PC-9 (cell line): ENCODE measurements at regions of chr5 and their contacts with region 1.

Region 1: GRCh38 chr5:72767289-72767998 is 49.0 kb upstream of the TNPO1 start:
- DNase-seq: no peak
- H3K4me3 ChIP-seq: no peak overlapping the region
- H3K27ac ChIP-seq: no peak overlapping the region
- H3K4me1 ChIP-seq: no peaks in the 10 kb centered on the region
- H3K27me3 ChIP-seq: no peaks in the 10 kb centered on the region
- CTCF ChIP-seq: no peak

Region 2: DNA sequence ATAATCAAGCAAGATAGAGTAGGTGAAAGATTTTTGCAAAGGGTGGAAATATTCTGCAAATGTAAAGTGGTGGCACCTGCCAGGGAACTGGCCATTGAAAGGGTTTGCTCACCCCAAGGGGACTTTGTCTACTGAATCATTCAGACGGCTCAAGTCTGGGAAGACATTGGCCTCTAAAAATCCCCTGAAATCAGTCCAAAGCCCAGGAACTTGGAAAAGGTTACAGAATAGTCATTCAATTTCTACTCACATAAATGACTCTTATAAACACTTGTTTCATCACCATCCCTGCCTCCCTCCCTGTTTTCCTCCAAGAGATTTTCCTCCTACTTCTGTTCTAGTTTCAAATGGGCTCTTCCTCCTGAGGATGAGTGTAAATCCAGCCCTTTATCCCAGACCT is 288.8 kb before region 1 on chr5:
- CTCF ChIA-PET with region 1: no interaction called
- POLR2A ChIA-PET with region 1: no interaction called
- intact Hi-C with region 1: no loop called
- DNase-seq: no peak
- H3K4me3 ChIP-seq: no peak overlapping the region
- H3K27ac ChIP-seq: no peak overlapping the region
- H3K4me1 ChIP-seq: no peaks in the 10 kb centered on the region
- H3K27me3 ChIP-seq: no peaks in the 10 kb centered on the region
- CTCF ChIP-seq: no peak

Region 3: DNA sequence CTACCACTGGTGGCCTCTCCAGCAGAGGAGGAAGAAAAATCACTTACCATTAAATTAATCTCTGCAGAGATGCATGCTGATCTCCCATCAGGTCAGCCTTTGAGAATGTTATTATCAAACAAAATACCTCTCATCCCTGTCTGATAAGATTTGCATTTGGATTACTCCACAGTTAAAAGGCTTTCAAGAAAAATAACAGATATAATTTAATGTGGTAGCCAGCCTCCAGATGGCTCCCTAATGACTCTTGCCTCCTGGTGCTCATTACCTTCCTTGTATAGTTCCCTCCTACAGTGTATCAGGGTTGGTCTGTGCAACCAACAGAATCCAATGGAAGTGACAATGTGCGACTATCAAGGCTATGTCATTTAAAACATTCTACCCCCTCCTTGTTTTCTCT is 14.5 kb before region 1 on chr5:
- CTCF ChIA-PET with region 1: no interaction called
- POLR2A ChIA-PET with region 1: interaction called, 10 read pairs
- intact Hi-C with region 1: no loop called
- DNase-seq: no peak
- H3K4me3 ChIP-seq: no peak overlapping the region
- H3K27ac ChIP-seq: no peak overlapping the region
- H3K4me1 ChIP-seq: no peaks in the 10 kb centered on the region
- H3K27me3 ChIP-seq: no peaks in the 10 kb centered on the region
- CTCF ChIP-seq: no peak